A549 (cell line): ENCODE measurements at regions of chr1 and their contacts with region 1.

Region 1: DNA sequence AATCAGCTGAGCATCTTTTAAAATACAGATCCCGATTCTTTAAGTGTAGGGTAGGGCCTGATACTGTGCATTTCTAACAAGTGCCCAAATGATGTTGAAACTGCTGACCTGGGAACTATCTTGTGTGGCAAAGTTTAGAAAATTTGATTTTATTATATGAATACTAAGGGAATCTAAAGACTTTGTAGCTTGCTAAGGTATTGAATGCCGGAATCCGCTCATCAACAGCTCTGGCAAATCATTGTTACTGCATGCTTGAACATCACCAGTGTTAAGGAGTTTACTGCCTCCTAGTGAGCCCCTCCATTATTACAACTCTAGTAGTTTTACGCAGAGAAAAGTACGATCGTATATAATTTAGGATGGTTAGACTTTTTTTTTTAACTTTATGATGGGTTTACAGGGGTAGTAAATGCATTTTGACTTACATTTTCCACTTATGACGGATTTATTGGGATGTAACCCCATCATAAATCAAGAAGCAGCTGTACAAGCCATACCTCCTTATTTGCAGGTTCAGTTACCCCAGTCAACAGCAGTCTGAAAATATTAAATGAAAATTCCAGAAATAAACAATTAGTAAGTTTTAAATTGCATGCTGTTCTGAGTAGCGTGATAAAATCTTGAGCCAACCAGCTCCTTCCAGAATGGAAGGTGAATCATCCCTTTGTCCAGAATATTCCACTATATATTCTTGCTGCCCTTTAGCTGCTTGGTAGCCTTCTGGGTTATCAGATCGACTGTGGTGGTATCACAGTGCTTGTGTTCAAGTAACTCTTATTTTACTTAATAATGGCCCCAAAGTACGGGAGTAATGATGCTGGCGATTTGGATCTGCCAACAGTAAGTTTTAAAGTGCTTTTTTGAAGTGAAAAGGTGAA is 892 bp downstream of the TYW3 start:
- DNase-seq: peak; percentile 26 to 73
- ATAC-seq: peak; percentile 35 to 64; a peak in 4 of 6 replicates
- H3K4me3 ChIP-seq: peak overlapping the region; percentile 66
- H3K27ac ChIP-seq: peak overlapping the region; percentile 84 to 94
- H3K4me1 ChIP-seq: peaks cover 28% of the 10 kb centered on the region
- CTCF ChIP-seq: peak; percentile 60
- EP300 ChIP-seq: no peak
- POLR2A ChIP-seq: no peak
- RAD21 ChIP-seq: peak; percentile 54 to 63

Region 2: DNA sequence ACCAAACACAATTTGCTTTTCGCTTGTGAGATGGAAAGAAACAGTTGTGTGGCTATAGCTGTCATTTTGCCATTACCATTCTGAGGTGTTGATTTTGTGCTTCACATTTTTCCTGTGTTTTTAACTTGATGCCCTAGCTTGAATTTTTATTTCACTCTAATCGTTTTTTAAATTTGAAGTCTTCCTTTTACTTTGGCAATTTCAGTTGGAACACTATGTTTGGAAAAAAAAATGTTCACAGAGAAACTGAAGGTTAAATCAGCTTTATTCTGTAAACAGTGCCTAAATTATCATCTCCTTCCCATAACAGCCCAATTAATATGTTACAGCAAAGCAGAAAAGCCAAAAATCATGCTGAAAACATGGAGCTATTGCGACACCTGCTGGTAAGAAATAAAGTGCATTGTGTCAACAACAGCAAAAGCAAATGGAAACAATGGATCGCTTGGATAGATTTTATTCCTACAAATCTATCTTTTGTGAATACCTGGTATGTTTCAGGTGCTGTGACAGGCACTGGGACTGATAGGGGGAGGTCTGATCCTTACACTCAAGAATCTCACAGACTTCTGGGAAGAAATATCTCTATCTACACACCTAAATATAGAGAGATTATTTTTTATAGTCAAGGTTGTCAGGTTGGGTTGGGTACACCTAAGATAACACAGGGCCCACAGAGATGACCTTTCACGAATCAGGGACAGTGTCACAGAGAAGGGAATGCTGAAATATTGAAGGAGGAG is 44.1 kb before region 1 on chr1:
- CTCF ChIA-PET with region 1: interaction called, 10 read pairs
- POLR2A ChIA-PET with region 1: no interaction called
- DNase-seq: peak in 1 of 2 experiments; percentile 42
- ATAC-seq: peak in 1 of 2 experiments; percentile 73; a peak in 4 of 6 replicates
- H3K4me3 ChIP-seq: no peak overlapping the region
- H3K27ac ChIP-seq: peak overlapping the region in 1 of 2 experiments; percentile 24; a peak in 1 of 6 replicates
- H3K4me1 ChIP-seq: peaks cover 19% of the 10 kb centered on the region; the same call in 2 of the 3 replicates
- CTCF ChIP-seq: peak; percentile 80
- EP300 ChIP-seq: no peak
- POLR2A ChIP-seq: no peak
- RAD21 ChIP-seq: peak; percentile 79 to 81